ENCODE measurements at regions of chr12 and their contacts with region 1.

Region 1: GRCh38 chr12:46473634-46474329 is 101.2 kb upstream of the SLC38A2 start:
- DNase-seq: peak; percentile 98
- H3K4me3 ChIP-seq: peak overlapping the region in 1 of 3 experiments; percentile 29
- H3K27ac ChIP-seq: peak overlapping the region; percentile 94
- H3K4me1 ChIP-seq: peaks cover 56% of the 10 kb centered on the region
- H3K27me3 ChIP-seq: no peaks in the 10 kb centered on the region
- CTCF ChIP-seq: no peak
- POLR2A ChIP-seq: peak; percentile 19

Region 2: GRCh38 chr12:46382964-46383653 is 90.7 kb before region 1 on chr12:
- CTCF ChIA-PET with region 1: interaction called, 3 read pairs
- POLR2A ChIA-PET with region 1: no interaction called
- dilution Hi-C with region 1: no loop called
- intact Hi-C with region 1: loop called (anchors 1 kb)
- DNase-seq: peak; percentile 97
- H3K4me3 ChIP-seq: peak overlapping the region; percentile 39 to 68 (median 44)
- H3K27ac ChIP-seq: peak overlapping the region; percentile 98
- H3K4me1 ChIP-seq: peaks cover 44% of the 10 kb centered on the region
- H3K27me3 ChIP-seq: no peaks in the 10 kb centered on the region
- CTCF ChIP-seq: peak in 1 of 2 donors; percentile 14
- POLR2A ChIP-seq: peak; percentile 76

Region 3: GRCh38 chr12:46450279-46450748 is 23.5 kb before region 1 on chr12:
- CTCF ChIA-PET with region 1: interaction called, 6 read pairs
- POLR2A ChIA-PET with region 1: no interaction called
- dilution Hi-C with region 1: no loop called
- intact Hi-C with region 1: loop called (anchors 1 kb)
- DNase-seq: peak; percentile 73
- H3K4me3 ChIP-seq: no peak overlapping the region
- H3K27ac ChIP-seq: peak overlapping the region; percentile 84
- H3K4me1 ChIP-seq: peaks cover 64% of the 10 kb centered on the region
- H3K27me3 ChIP-seq: no peaks in the 10 kb centered on the region
- CTCF ChIP-seq: no peak
- POLR2A ChIP-seq: no peak

Region 4: GRCh38 chr12:46459861-46460545 is 13.8 kb before region 1 on chr12:
- CTCF ChIA-PET with region 1: interaction called, 13 read pairs
- POLR2A ChIA-PET with region 1: no interaction called
- dilution Hi-C with region 1: no loop called
- intact Hi-C with region 1: no loop called
- DNase-seq: no peak
- H3K4me3 ChIP-seq: no peak overlapping the region
- H3K27ac ChIP-seq: no peak overlapping the region
- H3K4me1 ChIP-seq: peaks cover 5% of the 10 kb centered on the region
- H3K27me3 ChIP-seq: no peaks in the 10 kb centered on the region
- CTCF ChIP-seq: no peak
- POLR2A ChIP-seq: no peak

Region 5: DNA sequence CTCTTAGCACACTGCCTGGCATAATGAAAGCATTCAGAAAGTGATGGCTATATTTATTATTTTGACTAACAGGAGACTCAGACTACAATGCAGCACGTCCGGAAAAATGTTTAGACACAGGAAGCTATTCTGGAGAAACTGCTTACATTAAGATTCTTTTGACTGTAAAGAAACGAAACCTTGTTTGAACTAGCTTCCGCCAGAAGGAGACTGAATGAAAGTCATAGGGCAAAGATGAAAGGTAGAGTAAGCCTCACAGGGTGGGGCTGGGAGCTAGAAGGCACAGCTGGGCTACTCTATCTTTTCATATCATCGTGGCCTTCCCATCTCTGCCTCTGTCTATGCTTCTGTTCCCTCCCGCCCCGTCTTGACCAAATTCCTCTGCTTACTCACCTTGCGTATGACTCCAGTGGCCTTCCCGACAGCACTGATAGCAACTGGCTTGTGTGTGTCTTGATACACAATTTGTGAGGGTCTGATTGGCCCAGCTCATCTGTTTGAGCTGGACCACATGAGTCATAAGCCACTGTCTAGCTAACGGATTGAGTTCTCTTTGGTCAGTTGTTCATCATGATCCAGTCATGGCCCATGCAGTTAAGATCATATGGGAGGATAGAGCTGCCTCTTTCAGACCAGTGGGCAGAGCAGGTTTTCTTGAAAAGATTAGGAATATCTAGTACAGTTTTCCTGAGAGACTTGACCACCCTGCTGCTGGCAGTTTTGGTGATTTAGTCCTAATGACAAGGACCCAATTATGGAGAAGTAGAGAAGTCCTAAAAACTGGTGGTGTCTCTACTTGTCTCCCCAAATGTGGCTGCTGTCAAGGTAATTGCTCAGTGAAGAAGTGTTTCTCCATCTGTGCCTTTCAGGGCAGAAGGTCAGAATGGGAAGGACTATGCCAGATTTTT is 50.3 kb after region 1 on chr12:
- CTCF ChIA-PET with region 1: interaction called, 4 read pairs
- POLR2A ChIA-PET with region 1: interaction called, 4 read pairs
- dilution Hi-C with region 1: no loop called
- intact Hi-C with region 1: loop called (anchors 1 kb)
- DNase-seq: peak; percentile 83
- H3K4me3 ChIP-seq: peak overlapping the region in 1 of 3 experiments; percentile 34
- H3K27ac ChIP-seq: peak overlapping the region; percentile 81
- H3K4me1 ChIP-seq: peaks cover 33% of the 10 kb centered on the region
- H3K27me3 ChIP-seq: no peaks in the 10 kb centered on the region
- CTCF ChIP-seq: no peak
- POLR2A ChIP-seq: no peak

Region 6: DNA sequence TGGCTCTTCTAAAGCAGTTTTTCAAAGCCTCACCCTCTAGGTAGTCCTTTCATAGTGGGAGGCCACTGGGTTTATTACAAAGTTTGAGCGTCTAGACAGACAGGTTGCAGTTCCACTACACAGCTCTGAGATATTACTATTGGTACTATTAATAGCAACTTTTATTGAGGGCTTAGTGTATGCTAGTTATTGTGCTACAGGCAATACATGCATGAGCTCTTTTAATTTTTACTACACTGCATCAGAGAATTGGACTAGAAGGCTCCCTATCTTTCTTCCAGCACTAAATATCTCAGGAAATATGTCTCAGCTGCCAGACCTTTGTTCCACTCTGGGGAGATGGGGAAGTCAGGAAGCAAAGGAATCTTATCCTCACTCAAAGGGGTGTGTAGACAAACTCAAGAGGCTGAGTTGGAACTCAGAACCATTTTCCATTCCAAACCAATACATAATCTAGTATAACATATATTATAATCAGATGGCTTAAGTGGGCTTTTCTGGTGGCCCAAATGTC is 60.6 kb after region 1 on chr12:
- CTCF ChIA-PET with region 1: no interaction called
- POLR2A ChIA-PET with region 1: no interaction called
- dilution Hi-C with region 1: no loop called
- intact Hi-C with region 1: no loop called
- DNase-seq: peak; percentile 74
- H3K4me3 ChIP-seq: no peak overlapping the region
- H3K27ac ChIP-seq: peak overlapping the region; percentile 73
- H3K4me1 ChIP-seq: peaks cover 18% of the 10 kb centered on the region
- H3K27me3 ChIP-seq: no peaks in the 10 kb centered on the region
- CTCF ChIP-seq: no peak
- POLR2A ChIP-seq: no peak

Region 7: GRCh38 chr12:46562625-46563228 is 88.9 kb after region 1 on chr12:
- CTCF ChIA-PET with region 1: no interaction called
- POLR2A ChIA-PET with region 1: no interaction called
- dilution Hi-C with region 1: no loop called
- intact Hi-C with region 1: loop called (anchors 2 kb)
- DNase-seq: peak; percentile 94
- H3K4me3 ChIP-seq: peak overlapping the region in 1 of 3 experiments; percentile 28
- H3K27ac ChIP-seq: peak overlapping the region; percentile 96
- H3K4me1 ChIP-seq: peaks cover 24% of the 10 kb centered on the region
- H3K27me3 ChIP-seq: no peaks in the 10 kb centered on the region
- CTCF ChIP-seq: no peak
- POLR2A ChIP-seq: peak; percentile 39

Measured in endothelial cell of umbilical vein (primary cell).